ENCODE measurements at regions of chr7 and their contacts with region 1.

Region 1: DNA sequence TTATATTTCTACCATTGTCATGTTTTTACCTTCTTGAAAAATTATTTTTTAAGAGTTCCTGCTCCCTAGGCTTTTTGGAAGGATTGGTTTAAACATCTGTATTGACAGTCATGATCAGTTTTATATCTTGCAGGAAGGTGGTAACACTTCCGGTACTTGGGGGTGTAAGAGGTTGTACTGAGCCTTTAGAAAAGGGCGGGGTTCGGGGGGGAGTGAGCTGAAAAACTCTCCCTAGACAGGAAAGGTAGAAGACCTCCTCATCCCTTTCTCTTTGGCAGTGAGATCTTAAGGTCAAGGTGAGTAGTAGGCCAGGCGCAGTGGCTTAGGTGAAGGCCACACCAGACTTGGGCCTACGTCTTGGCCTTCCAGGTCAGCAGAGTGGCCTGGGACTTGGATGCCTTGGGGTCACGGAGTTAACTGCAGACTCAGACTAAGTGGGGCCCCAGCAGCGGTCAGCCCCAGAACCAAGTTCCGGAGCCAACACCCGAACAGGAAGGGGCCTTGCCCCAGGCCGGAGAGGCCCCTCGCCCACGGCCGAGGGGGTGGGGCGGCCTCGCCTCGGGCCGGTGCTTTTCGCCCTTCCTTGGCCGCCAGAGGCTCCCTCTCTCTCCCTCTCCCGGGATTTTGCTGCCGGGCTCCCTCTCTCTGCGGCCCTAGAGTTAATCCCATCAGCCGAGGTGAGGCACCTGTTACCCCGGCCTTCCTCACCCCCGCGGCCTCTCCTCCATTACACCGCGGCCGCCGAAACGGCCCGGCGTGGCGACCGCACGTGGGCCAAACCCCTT is at the start of gene PPP1R9A:
- DNase-seq: peak; percentile 23
- H3K4me3 ChIP-seq: peak within 1 kb of the TSS; percentile 35 to 63 (median 45)
- H3K27ac ChIP-seq: no peak within 1 kb of the TSS
- H3K4me1 ChIP-seq: peaks cover 3% of the 10 kb centered on the region
- H3K27me3 ChIP-seq: peaks cover 11 to 18% of the 10 kb centered on the region in 2 experiments
- CTCF ChIP-seq: peak in 1 of 2 donors; percentile 57
- POLR2A ChIP-seq: no peak
- total RNA-seq, gene PPP1R9A: 3.0 and 3.2 TPM in 2 replicates

Region 2: GRCh38 chr7:94888551-94888950 is 18.7 kb before region 1 on chr7:
- CTCF ChIA-PET with region 1: interaction called, 3 read pairs
- POLR2A ChIA-PET with region 1: no interaction called
- dilution Hi-C with region 1: no loop called
- intact Hi-C with region 1: loop called (anchors 1 kb)
- DNase-seq: peak; percentile 85
- H3K4me3 ChIP-seq: no peak overlapping the region
- H3K27ac ChIP-seq: no peak overlapping the region
- H3K4me1 ChIP-seq: peaks cover 3% of the 10 kb centered on the region
- H3K27me3 ChIP-seq: no peaks in the 10 kb centered on the region
- CTCF ChIP-seq: peak; percentile 10 to 44
- POLR2A ChIP-seq: no peak

Measured in endothelial cell of umbilical vein (primary cell).